Activated T-helper 2 cell treated with anti-CD3 and anti-CD28 coated beads, Interferon-gamma antibody, Interleukin-2, Interleukin-4, amounts not matched to agents 10 μg/mL and 5 μg/mL and 100 μg/mL, durations not matched to agents 14 hours and 24 hours and 36 hours (primary cell): ENCODE measurements at regions of chr6 and their contacts with region 1.

Region 1: DNA sequence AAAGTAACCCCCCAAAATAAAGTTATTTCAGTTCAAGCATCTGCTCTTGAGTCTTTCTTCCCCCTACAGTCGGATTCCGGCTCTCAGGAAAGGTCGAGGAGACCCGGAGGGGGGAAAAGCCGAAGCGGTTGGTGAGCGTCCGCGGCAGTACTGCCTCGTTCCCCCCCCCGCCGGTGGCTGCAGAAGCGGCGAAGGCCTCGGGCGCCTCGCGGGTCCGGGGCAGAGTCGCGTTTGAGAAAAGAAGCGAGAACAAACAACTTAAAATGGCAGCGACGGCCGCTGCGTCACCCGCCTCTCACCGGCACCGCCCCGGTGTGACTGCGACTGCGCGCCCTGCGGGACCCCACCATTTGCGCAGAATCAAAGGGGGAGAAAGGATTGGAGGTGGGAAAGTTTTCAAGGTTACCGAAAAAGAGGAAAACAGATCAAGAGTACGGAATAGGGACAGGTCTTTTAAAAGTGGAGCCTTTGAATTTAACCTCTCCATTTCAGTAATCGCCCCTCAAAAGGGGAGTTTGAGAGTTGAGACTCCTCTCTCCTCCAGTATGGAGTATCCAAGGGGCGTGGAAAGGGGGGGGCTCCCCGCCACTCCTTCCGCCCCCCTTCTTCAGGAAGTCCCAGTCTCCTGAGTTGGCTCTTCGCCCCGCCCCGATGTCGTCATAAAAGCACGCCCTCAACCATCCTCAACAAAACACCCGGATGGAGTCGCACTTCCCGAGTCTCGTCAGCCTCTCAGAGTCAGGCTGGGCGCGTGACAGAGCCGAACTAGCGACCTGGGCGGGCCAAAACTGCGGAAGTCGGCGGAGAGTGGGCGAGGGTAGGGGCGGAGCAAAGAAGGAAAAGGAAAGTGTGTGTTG is 1.9 kb upstream of the C6orf62 start:
- DNase-seq: peak; percentile 100
- H3K4me3 Mint-ChIP-seq: peak overlapping the region; percentile 99
- H3K27ac Mint-ChIP-seq: peak overlapping the region; percentile 100
- H3K4me1 Mint-ChIP-seq: peaks cover 33% of the 10 kb centered on the region
- H3K27me3 Mint-ChIP-seq: no peaks in the 10 kb centered on the region

Region 2: GRCh38 chr6:24743265-24743943 is 22.6 kb after region 1 on chr6:
- intact Hi-C with region 1: loop called (anchors 1 kb)
- DNase-seq: no peak
- H3K4me3 Mint-ChIP-seq: no peak overlapping the region
- H3K27ac Mint-ChIP-seq: peak overlapping the region; percentile 79
- H3K4me1 Mint-ChIP-seq: peaks cover 19% of the 10 kb centered on the region
- H3K27me3 Mint-ChIP-seq: no peaks in the 10 kb centered on the region

Region 3: DNA sequence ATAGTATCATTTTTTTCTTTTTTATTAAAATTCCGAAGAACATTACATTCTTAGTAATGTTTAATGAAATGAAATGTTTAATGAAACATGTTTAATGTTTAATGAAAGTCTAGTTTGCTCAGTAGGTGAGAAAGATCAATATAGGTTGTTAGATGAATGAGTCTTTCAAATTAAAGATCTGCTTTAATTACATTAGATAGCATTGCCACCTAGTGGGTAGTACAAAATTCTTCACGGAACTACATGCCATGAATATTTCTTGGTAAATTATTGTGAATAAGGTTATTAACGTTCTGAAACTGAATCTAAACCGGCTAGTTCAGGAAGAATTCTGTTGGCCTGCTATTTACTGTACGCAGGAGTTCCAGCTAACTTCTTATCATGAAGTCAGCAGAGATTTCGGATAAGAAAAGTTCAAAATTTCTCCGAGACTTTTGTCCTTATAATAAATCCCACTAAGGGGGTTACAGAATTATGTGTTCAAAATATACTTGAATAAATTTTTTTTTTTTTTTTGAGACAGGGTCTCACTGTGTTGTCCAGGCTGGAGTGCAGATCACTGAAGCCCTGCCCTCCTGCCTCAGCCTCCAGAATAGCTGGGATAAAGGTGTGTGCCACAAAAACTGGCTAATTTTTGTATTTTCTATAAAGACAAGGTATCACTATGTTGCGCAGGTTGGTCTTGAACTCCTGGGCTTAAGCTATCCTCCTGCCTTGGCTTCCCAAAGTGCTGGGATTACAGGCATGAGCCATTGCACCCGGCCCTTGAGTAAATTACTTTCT is 46.0 kb after region 1 on chr6:
- intact Hi-C with region 1: loop called (anchors 2 kb)
- DNase-seq: no peak
- H3K4me3 Mint-ChIP-seq: no peak overlapping the region
- H3K27ac Mint-ChIP-seq: no peak overlapping the region
- H3K4me1 Mint-ChIP-seq: peaks cover 8% of the 10 kb centered on the region
- H3K27me3 Mint-ChIP-seq: no peaks in the 10 kb centered on the region

Region 4: GRCh38 chr6:24774696-24775519 is 54.1 kb after region 1 on chr6 and contains the start of gene GMNN:
- intact Hi-C with region 1: loop called (anchors 1 kb)
- DNase-seq: peak; percentile 95
- H3K4me3 Mint-ChIP-seq: peak within 1 kb of the TSS; percentile 98
- H3K27ac Mint-ChIP-seq: peak within 1 kb of the TSS; percentile 98
- H3K4me1 Mint-ChIP-seq: peaks cover 30% of the 10 kb centered on the region
- H3K27me3 Mint-ChIP-seq: no peaks in the 10 kb centered on the region
- total RNA-seq, gene GMNN: 68.5 and 71.5 TPM in 2 replicates

Region 5: GRCh38 chr6:25042036-25042521 is 321.2 kb after region 1 on chr6:
- intact Hi-C with region 1: loop called (anchors 10 kb)
- DNase-seq: peak; percentile 25
- H3K4me3 Mint-ChIP-seq: peak overlapping the region; percentile 88
- H3K27ac Mint-ChIP-seq: peak overlapping the region; percentile 86
- H3K4me1 Mint-ChIP-seq: peaks cover 51% of the 10 kb centered on the region
- H3K27me3 Mint-ChIP-seq: no peaks in the 10 kb centered on the region